Cardiac septum (tissue), 1 donor: ENCODE measurements at regions of chr9 and their contacts with region 1.

Region 1: DNA sequence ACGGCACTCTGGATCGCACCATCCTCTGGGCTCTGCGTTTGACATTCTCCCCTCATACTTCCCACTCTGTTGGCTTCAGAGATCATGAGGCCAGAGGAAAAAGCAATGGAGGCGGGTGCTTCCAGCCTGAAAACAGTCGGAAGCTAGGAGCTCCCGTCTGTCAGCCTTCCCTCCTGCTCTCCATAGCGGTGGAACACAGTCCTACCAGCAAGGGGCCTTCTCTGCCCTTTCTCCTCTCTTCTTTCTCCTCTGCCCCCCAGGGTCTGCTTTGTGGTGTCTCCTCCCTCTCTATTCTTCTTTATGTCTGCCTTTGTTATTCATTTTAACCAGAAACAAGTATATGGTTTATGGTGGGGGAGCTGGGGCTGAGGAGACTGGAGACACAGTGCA is 152.5 kb upstream of the NFIB start:
- DNase-seq: no peak

Region 2: DNA sequence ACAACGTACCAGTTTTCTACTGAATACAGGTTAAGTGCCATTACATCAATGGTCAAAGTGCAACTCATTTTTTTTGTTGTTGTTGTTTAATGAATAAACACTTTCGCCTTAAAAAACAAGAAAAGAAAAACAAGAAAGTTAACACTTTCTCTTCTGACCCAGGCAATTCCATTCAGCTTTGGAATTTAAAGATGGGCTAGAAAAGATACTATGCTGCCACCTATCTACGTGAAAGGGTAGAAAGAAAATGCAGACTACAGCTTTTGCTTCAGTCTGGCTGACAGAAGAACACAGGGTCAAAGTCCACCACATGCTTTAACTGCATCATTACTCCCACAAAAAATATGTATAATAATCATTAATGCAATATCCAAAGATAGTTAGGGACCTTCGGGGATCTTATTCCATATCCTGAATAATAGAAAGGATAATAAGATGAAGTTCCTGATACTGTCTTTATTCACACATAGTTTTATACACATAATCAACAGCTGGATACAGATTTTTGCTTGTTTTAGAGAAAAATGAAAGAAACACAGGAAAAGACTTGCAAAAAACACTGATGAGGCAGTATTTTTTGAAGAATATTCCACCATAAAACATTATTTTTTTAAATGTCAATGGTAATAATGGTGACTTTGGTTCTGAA is 186.4 kb after region 1 on chr9:
- intact Hi-C with region 1: loop called (anchors 10 kb)
- DNase-seq: no peak

Region 3: GRCh38 chr9:15389173-15389572 is 922.7 kb after region 1 on chr9:
- intact Hi-C with region 1: no loop called
- DNase-seq: no peak